ENCODE measurements at regions of chr2 and their contacts with region 1.

Region 1: DNA sequence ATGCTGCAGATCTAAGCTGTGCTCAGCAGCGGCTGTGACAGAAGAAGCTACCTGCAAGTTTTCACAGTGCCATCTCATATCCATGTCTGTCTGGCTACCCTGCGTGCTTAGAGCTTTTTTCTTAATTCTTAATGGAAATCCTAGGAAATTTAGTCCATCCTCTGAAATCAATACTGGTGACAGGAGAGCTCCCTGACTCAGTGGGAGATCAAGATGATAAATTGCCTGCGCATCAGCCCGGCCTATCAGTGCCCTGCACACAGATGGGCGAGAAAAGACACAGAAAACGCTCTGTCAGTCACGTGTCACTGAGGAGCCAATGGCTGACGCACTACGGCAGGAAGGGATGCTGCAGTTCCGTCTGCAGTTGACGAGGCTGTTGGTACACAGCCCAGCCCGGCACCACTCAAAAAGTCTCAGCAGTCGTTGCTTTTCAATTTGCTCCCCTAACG is 819.6 kb upstream of the FSHR start:
- DNase-seq: peak; percentile 91 to 98 (median 96)
- H3K4me3 ChIP-seq: peak overlapping the region; percentile 35 to 83 (median 66)
- H3K27ac ChIP-seq: peak overlapping the region; percentile 44 to 96 (median 87)
- H3K27me3 ChIP-seq: no peaks in the 10 kb centered on the region
- CTCF ChIP-seq: peak in 11 of 56 donors; percentile 7 to 55 (median 24)

Region 2: GRCh38 chr2:49843312-49843711 is 130.6 kb before region 1 on chr2:
- intact Hi-C with region 1: loop called in 1 of 2 experiments (anchors 10 kb)
- DNase-seq: no peak
- H3K4me3 ChIP-seq: no peak overlapping the region
- H3K27ac ChIP-seq: no peak overlapping the region
- H3K27me3 ChIP-seq: no peaks in the 10 kb centered on the region
- CTCF ChIP-seq: no peak

Region 3: GRCh38 chr2:50084086-50084843 is 110.3 kb after region 1 on chr2:
- intact Hi-C with region 1: no loop called
- DNase-seq: peak in 2 of 10 donors; percentile 28 to 39
- H3K4me3 ChIP-seq: no peak overlapping the region
- H3K27ac ChIP-seq: no peak overlapping the region
- H3K27me3 ChIP-seq: no peaks in the 10 kb centered on the region
- CTCF ChIP-seq: no peak

Region 4: GRCh38 chr2:50133766-50134165 is 159.8 kb after region 1 on chr2:
- intact Hi-C with region 1: loop called in 1 of 2 experiments (anchors 10 kb)
- DNase-seq: peak in 1 of 10 donors; percentile 34
- H3K4me3 ChIP-seq: no peak overlapping the region
- H3K27ac ChIP-seq: peak overlapping the region in 1 of 59 donors; percentile 72
- H3K27me3 ChIP-seq: no peaks in the 10 kb centered on the region
- CTCF ChIP-seq: no peak

Measured in dorsolateral prefrontal cortex (tissue), 120 donors.